ENCODE measurements at regions of chr11 and their contacts with region 1.

Region 1: DNA sequence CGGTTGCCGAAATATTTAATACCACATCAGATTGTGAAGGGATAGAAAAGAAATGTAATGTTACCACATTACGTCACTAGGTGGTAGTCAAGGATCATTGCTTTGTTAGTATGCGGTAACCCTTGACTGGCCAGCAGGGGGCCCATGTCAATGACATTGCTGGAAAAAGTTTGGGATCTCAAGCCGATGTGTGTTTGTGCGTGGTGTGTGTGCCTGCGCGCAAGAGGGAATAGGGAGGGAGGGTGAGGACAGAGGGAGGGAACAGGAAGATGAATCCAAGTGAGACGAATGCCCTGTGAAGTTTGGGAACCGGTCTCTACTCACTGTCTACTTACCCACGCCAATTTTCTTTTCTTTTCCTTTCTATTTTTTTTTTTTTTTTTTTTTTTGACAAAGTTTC is 10.7 kb upstream of the MRGPRX2 start:
- DNase-seq: peak; percentile 64
- ATAC-seq: peak; percentile 94
- H3K4me3 Mint-ChIP-seq: peak overlapping the region; percentile 59
- H3K27ac Mint-ChIP-seq: no peak overlapping the region
- H3K4me1 Mint-ChIP-seq: peaks cover 3% of the 10 kb centered on the region
- H3K27me3 Mint-ChIP-seq: peaks cover 28% of the 10 kb centered on the region
- CTCF ChIP-seq: peak; percentile 99

Region 2: GRCh38 chr11:18907391-18907790 is 163.9 kb before region 1 on chr11:
- CTCF ChIA-PET with region 1: no interaction called
- POLR2A ChIA-PET with region 1: no interaction called
- intact Hi-C with region 1: no loop called
- DNase-seq: no peak
- ATAC-seq: no peak
- H3K4me3 Mint-ChIP-seq: no peak overlapping the region
- H3K27ac Mint-ChIP-seq: no peak overlapping the region
- H3K4me1 Mint-ChIP-seq: no peaks in the 10 kb centered on the region
- H3K27me3 Mint-ChIP-seq: peaks cover 3% of the 10 kb centered on the region
- CTCF ChIP-seq: no peak

Region 3: DNA sequence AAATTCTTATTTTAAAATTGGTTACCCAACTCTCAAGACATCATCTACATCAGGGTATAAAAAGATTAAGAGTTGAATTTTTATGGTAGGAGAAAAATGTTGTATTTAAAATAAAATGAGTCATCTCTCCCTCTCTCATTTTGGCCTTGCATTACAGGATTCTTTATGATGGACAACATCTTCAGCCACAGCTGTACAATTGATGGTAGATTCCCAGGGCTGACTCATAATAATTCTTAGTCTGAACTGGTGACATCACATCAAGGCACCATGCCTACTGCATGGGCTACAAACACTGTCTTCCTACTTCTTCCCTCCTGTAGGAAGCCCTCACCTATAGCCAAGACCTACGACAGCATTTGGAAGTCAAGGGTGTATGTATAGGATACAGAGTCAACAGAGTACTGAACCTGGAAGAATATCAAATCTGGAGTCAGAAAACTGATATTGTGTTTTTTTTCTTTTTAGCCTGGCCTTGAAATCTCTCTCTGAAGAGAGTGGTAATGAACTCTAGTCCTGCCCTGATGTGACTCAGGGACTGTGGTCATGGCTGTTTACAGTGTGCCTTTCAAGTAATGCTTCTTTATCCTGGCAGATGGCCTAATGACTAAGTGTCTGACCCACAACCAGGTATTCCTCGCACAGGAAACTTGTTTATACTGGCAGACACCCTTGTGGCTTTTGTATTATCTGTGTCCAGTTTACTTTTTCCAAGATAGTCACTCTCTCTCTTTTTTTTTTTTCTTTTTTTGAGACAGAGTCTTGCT is 43.2 kb before region 1 on chr11:
- CTCF ChIA-PET with region 1: no interaction called
- POLR2A ChIA-PET with region 1: no interaction called
- intact Hi-C with region 1: no loop called
- DNase-seq: no peak
- ATAC-seq: no peak
- H3K4me3 Mint-ChIP-seq: no peak overlapping the region
- H3K27ac Mint-ChIP-seq: no peak overlapping the region
- H3K4me1 Mint-ChIP-seq: no peaks in the 10 kb centered on the region
- H3K27me3 Mint-ChIP-seq: peaks cover 21% of the 10 kb centered on the region
- CTCF ChIP-seq: no peak

Region 4: GRCh38 chr11:19055016-19055415 is 16.2 kb before region 1 on chr11:
- CTCF ChIA-PET with region 1: interaction called, 44 read pairs
- POLR2A ChIA-PET with region 1: interaction called, 3 read pairs
- intact Hi-C with region 1: no loop called
- DNase-seq: no peak
- ATAC-seq: no peak
- H3K4me3 Mint-ChIP-seq: no peak overlapping the region
- H3K27ac Mint-ChIP-seq: no peak overlapping the region
- H3K4me1 Mint-ChIP-seq: peaks cover 1% of the 10 kb centered on the region
- H3K27me3 Mint-ChIP-seq: peaks cover 8% of the 10 kb centered on the region
- CTCF ChIP-seq: no peak

Region 5: DNA sequence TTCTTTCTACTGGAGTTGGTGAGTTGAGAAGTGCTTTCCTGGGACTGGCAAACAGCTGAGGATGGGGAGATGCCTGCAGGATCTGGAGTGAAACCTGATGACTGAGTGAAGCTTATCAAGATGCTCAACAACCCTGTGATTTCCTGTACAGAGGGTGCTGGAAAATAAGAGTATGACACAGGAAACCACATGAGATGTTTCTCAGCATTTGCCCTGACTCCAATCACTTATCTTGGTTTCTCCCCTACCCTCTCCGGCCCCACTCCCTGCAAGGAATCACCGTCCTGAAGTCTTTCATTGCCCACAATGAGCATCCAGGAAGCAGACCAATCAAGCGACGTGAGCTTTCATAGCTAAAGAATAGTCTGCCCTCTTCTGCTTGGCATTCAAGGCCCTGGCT is 10.6 kb before region 1 on chr11 and contains the start of gene MRGPRX2:
- CTCF ChIA-PET with region 1: interaction called, 44 read pairs
- POLR2A ChIA-PET with region 1: interaction called, 3 read pairs
- intact Hi-C with region 1: no loop called
- DNase-seq: peak; percentile 22
- ATAC-seq: peak; percentile 87
- H3K4me3 Mint-ChIP-seq: no peak within 1 kb of the TSS
- H3K27ac Mint-ChIP-seq: no peak within 1 kb of the TSS
- H3K4me1 Mint-ChIP-seq: peaks cover 19% of the 10 kb centered on the region
- H3K27me3 Mint-ChIP-seq: peaks cover 17% of the 10 kb centered on the region
- CTCF ChIP-seq: no peak
- total RNA-seq, gene MRGPRX2: not detected

Region 6: GRCh38 chr11:19134004-19134403 is 62.7 kb after region 1 on chr11:
- CTCF ChIA-PET with region 1: no interaction called
- POLR2A ChIA-PET with region 1: no interaction called
- intact Hi-C with region 1: no loop called
- DNase-seq: no peak
- ATAC-seq: no peak
- H3K4me3 Mint-ChIP-seq: no peak overlapping the region
- H3K27ac Mint-ChIP-seq: no peak overlapping the region
- H3K4me1 Mint-ChIP-seq: peaks cover 2% of the 10 kb centered on the region
- H3K27me3 Mint-ChIP-seq: no peaks in the 10 kb centered on the region
- CTCF ChIP-seq: no peak

Region 7: DNA sequence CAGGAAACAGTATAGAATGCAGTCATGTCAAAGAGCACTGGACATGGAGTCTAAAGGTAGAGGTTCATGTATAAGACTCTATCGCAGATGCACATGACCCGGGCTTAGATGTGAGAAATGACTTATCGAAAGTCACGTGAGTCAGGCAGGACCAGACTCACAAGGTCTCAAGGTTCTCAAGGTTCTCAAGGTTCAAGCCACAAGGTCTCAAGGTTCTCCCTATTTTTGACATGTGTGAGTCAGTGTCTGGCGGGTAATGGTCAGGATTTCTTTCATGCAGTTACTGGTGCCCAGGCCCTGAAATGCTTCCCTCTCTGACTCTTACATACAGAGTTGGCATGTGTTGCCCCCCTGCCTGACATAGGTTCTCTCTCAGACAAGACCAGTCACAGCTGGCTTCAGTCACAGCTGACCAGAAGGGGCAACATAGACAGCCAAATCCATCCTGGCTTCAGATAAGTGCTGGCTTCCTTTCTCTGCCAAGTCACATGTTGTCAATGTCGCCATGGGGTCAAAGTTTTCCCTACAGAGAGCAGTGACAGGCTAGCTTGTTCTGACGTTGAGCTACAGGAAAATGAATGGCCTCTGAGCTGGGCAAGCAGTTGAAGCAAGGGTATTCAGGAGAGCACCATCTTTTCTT is 120.4 kb after region 1 on chr11:
- CTCF ChIA-PET with region 1: no interaction called
- POLR2A ChIA-PET with region 1: no interaction called
- intact Hi-C with region 1: no loop called
- DNase-seq: no peak
- ATAC-seq: no peak
- H3K4me3 Mint-ChIP-seq: no peak overlapping the region
- H3K27ac Mint-ChIP-seq: no peak overlapping the region
- H3K4me1 Mint-ChIP-seq: no peaks in the 10 kb centered on the region
- H3K27me3 Mint-ChIP-seq: no peaks in the 10 kb centered on the region
- CTCF ChIP-seq: no peak

Region 8: GRCh38 chr11:19259487-19260345 is 188.5 kb after region 1 on chr11:
- CTCF ChIA-PET with region 1: interaction called, 13 read pairs
- POLR2A ChIA-PET with region 1: no interaction called
- intact Hi-C with region 1: no loop called
- DNase-seq: peak; percentile 82
- ATAC-seq: peak; percentile 94
- H3K4me3 Mint-ChIP-seq: no peak overlapping the region
- H3K27ac Mint-ChIP-seq: no peak overlapping the region
- H3K4me1 Mint-ChIP-seq: no peaks in the 10 kb centered on the region
- H3K27me3 Mint-ChIP-seq: peaks cover 2% of the 10 kb centered on the region
- CTCF ChIP-seq: peak; percentile 89

Region 9: GRCh38 chr11:19742588-19743292 is 671.5 kb after region 1 on chr11:
- CTCF ChIA-PET with region 1: interaction called, 3 read pairs
- POLR2A ChIA-PET with region 1: no interaction called
- intact Hi-C with region 1: loop called (anchors 5 kb)
- DNase-seq: peak; percentile 77
- ATAC-seq: peak; percentile 84
- H3K4me3 Mint-ChIP-seq: no peak overlapping the region
- H3K27ac Mint-ChIP-seq: no peak overlapping the region
- H3K4me1 Mint-ChIP-seq: no peaks in the 10 kb centered on the region
- H3K27me3 Mint-ChIP-seq: peaks cover 6% of the 10 kb centered on the region
- CTCF ChIP-seq: peak; percentile 72